ENCODE measurements at regions of chr3 and their contacts with region 1.

Region 1: GRCh38 chr3:48918388-48919214 is at the start of gene ARIH2:
- DNase-seq: peak; percentile 95 to 96 (median 96)
- H3K4me3 ChIP-seq: peak within 1 kb of the TSS; percentile 82 to 99 (median 85)
- H3K27ac ChIP-seq: peak within 1 kb of the TSS; percentile 93 to 98
- H3K4me1 ChIP-seq: peaks cover 5 to 25% (median 17%) of the 10 kb centered on the region in 4 experiments
- H3K27me3 ChIP-seq: no peaks in the 10 kb centered on the region

Region 2: GRCh38 chr3:48716982-48717746 is 201.4 kb before region 1 on chr3 and contains the start of gene IP6K2:
- CTCF ChIA-PET with region 1: no interaction called
- POLR2A ChIA-PET with region 1: interaction called, 11 read pairs
- DNase-seq: peak; percentile 97 to 98 (median 98)
- H3K4me3 ChIP-seq: peak within 1 kb of the TSS; percentile 92 to 100 (median 99)
- H3K27ac ChIP-seq: peak within 1 kb of the TSS; percentile 99 to 100
- H3K4me1 ChIP-seq: peaks cover 8 to 22% (median 9%) of the 10 kb centered on the region in 4 experiments
- H3K27me3 ChIP-seq: no peaks in the 10 kb centered on the region

Region 3: GRCh38 chr3:48898383-48899234 is 20.0 kb before region 1 on chr3 and contains the start of gene SLC25A20:
- CTCF ChIA-PET with region 1: interaction called, 8 read pairs
- POLR2A ChIA-PET with region 1: interaction called, 24 read pairs
- DNase-seq: peak; percentile 75 to 86 (median 84)
- H3K4me3 ChIP-seq: peak within 1 kb of the TSS; percentile 75 to 93 (median 83)
- H3K27ac ChIP-seq: peak within 1 kb of the TSS; percentile 46 to 87
- H3K4me1 ChIP-seq: peaks cover 15 to 42% (median 37%) of the 10 kb centered on the region in 4 experiments
- H3K27me3 ChIP-seq: no peaks in the 10 kb centered on the region

Region 4: GRCh38 chr3:48929358-48930035 is 10.9 kb after region 1 on chr3:
- CTCF ChIA-PET with region 1: interaction called, 11 read pairs
- POLR2A ChIA-PET with region 1: interaction called, 7 read pairs
- DNase-seq: no peak
- H3K4me3 ChIP-seq: no peak overlapping the region
- H3K27ac ChIP-seq: peak overlapping the region in 1 of 2 experiments; percentile 43
- H3K4me1 ChIP-seq: peaks cover 0 to 24% (median 15%) of the 10 kb centered on the region in 4 experiments
- H3K27me3 ChIP-seq: no peaks in the 10 kb centered on the region

Region 5: DNA sequence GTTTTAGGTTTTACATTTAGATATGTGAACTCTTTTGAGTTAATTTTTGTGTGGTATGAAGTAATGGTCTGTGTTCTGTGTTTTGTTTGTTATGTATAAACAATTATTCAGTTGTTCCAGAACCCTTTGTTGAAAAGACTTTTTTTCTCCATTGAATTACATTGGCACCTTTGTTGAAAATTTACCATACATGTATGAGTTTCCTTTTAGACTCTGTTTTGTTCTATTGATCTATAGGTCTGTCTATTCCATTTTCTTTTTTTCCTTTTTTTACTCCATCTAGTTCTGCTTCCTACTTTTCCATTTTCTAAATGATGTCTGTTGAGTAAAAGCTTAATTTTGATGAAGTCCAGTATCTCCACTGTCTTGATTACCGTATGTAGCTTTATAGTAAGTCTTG is 31.4 kb after region 1 on chr3:
- CTCF ChIA-PET with region 1: interaction called, 3 read pairs
- POLR2A ChIA-PET with region 1: interaction called, 11 read pairs
- DNase-seq: no peak
- H3K4me3 ChIP-seq: no peak overlapping the region
- H3K27ac ChIP-seq: no peak overlapping the region
- H3K4me1 ChIP-seq: no peaks in the 10 kb centered on the region
- H3K27me3 ChIP-seq: no peaks in the 10 kb centered on the region

Region 6: DNA sequence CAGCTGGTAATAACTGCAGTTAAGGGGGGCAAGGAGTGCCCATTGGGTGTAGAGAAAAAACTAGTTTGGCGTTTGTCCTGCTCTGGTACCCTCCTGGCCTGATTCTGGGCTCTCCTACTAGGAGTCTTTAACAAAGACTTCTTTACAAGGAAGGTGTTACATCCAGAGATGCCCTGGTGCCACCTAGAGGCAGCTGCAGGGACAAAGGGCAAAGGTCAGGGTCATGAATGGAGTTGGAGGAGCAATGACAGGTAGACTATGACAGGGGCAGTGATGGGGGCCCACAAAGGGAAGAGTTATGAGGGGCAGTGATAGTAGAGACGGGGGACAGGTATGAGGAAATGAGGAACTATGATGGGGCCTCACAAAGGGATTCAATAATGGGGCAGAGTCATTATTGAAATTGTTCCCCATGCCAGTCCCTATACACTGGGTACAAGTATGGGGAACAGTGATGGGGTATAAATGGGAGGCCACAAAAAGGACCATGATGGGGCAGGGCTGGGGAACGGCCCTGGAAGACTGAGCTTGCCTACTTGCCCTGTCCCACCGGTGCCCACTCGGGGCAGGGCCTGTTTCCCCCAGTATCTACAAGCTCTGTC is 239.6 kb after region 1 on chr3:
- CTCF ChIA-PET with region 1: no interaction called
- POLR2A ChIA-PET with region 1: no interaction called
- DNase-seq: peak; percentile 43 to 61 (median 59)
- H3K4me3 ChIP-seq: no peak overlapping the region
- H3K27ac ChIP-seq: no peak overlapping the region
- H3K4me1 ChIP-seq: peaks cover 0 to 22% (median 15%) of the 10 kb centered on the region in 4 experiments
- H3K27me3 ChIP-seq: no peaks in the 10 kb centered on the region

Measured in common myeloid progenitor, CD34-positive (primary cell).